Gastrocnemius medialis (tissue), 4 donors: ENCODE measurements at regions of chr17 and their contacts with region 1.

Region 1: GRCh38 chr17:74368092-74369081 is 1.1 kb downstream of the GPR142 start:
- DNase-seq: peak; percentile 61 to 71
- ATAC-seq: peak; percentile 86 to 90
- H3K4me3 ChIP-seq: no peak overlapping the region
- H3K27ac ChIP-seq: no peak overlapping the region
- H3K4me1 ChIP-seq: peaks cover 0 to 7% of the 10 kb centered on the region in 2 donors
- H3K27me3 ChIP-seq: no peaks in the 10 kb centered on the region
- CTCF ChIP-seq: peak; percentile 90 to 98 (median 96)
- POLR2A ChIP-seq: no peak

Region 2: DNA sequence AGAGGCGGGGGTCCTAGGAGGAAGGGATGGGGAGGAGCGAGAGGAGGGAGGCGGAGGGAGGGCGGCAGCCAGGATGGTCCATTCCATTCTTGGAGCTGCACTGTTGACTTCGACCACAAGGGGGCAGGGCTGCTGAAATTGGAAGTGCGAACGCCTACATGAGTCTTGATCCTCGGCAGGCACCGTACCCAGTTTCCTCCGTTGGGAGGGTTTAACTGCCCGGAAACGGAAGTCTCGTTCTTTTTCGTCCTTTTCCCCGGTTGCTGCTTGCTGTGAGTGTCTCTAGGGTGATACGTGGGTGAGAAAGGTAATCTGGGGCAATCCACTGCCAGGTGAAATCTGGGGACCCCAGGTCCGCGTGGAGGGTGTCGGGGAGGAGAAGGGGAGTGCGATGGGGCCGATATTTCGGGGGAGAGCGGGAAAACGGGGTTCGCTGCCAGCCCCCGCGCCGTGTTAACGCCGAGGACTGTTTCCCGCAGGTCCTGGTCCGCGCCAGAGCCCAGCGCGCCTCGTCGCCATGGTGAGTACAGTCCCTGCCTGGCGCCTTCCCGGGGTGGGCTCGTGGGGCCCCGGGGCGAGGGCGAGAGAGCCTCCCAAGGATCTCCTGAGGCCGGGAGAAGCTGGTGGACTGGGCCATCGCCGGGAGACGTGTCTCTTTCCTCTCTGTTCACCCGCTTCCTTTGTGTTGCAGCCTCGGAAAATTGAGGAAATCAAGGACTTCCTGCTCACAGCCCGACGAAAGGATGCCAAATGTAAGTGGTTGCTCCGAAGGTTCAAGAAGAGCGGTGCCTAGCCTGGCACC is 164.7 kb before region 1 on chr17 and contains the start of gene RPL38:
- in situ Hi-C with region 1: loop called in 3 of 4 experiments (anchors 10 to 25 kb)
- intact Hi-C with region 1: no loop called
- DNase-seq: peak; percentile 94 to 95
- ATAC-seq: peak; percentile 92 to 96
- H3K4me3 ChIP-seq: peak within 1 kb of the TSS; percentile 80 to 93 (median 87)
- H3K27ac ChIP-seq: peak within 1 kb of the TSS; percentile 87 to 89 (median 88)
- H3K4me1 ChIP-seq: peaks cover 28 to 40% of the 10 kb centered on the region in 2 donors
- H3K27me3 ChIP-seq: peaks cover 0 to 13% (median 0%) of the 10 kb centered on the region in 3 donors
- CTCF ChIP-seq: peak; percentile 93 to 98 (median 96)
- POLR2A ChIP-seq: peak; percentile 90 to 93
- total RNA-seq, gene RPL38: 346 to 472 (median 443) TPM

Region 3: GRCh38 chr17:74305865-74306654 is 62.3 kb before region 1 on chr17:
- in situ Hi-C with region 1: loop called in 1 of 4 experiments (anchors 10 kb)
- intact Hi-C with region 1: no loop called
- DNase-seq: no peak
- ATAC-seq: no peak
- H3K4me3 ChIP-seq: no peak overlapping the region
- H3K27ac ChIP-seq: no peak overlapping the region
- H3K4me1 ChIP-seq: no peaks in the 10 kb centered on the region
- H3K27me3 ChIP-seq: no peaks in the 10 kb centered on the region
- CTCF ChIP-seq: no peak
- POLR2A ChIP-seq: no peak

Region 4: DNA sequence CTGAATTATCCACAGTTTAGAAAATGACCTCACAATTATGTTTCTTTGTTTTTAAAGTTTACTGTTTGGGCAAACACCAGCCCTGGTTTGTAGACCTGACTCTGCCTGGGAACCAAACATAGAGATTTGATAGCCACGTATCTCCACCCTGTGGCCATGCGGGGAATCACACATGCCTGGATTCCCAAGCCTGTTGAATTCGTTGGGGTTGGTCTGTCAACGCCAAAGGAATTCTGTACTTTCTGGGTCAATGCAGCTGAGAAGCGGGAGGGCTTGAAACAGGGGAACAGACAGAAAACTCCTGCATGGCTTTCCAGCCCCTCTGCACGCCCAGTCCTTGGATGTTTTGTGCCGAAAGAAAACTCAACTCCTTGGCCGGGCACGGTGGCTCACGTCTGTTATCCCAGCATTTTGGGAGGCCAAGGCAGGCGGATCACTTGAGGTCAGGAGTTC is 125.0 kb after region 1 on chr17:
- in situ Hi-C with region 1: loop called in 2 of 4 experiments (anchors 10 kb)
- intact Hi-C with region 1: loop called (anchors 1 kb)
- DNase-seq: peak; percentile 34 to 62
- ATAC-seq: peak; percentile 95 to 97
- H3K4me3 ChIP-seq: no peak overlapping the region
- H3K27ac ChIP-seq: no peak overlapping the region
- H3K4me1 ChIP-seq: peaks cover 4 to 12% of the 10 kb centered on the region in 2 donors
- H3K27me3 ChIP-seq: no peaks in the 10 kb centered on the region
- CTCF ChIP-seq: peak; percentile 84 to 92 (median 89)
- POLR2A ChIP-seq: no peak

Region 5: GRCh38 chr17:74528491-74529199 is 160.3 kb after region 1 on chr17:
- in situ Hi-C with region 1: no loop called
- intact Hi-C with region 1: loop called (anchors 1 kb)
- DNase-seq: peak in 1 of 2 donors; percentile 31
- ATAC-seq: peak; percentile 17 to 34
- H3K4me3 ChIP-seq: no peak overlapping the region
- H3K27ac ChIP-seq: no peak overlapping the region
- H3K4me1 ChIP-seq: no peaks in the 10 kb centered on the region
- H3K27me3 ChIP-seq: no peaks in the 10 kb centered on the region
- CTCF ChIP-seq: no peak
- POLR2A ChIP-seq: no peak

Region 6: DNA sequence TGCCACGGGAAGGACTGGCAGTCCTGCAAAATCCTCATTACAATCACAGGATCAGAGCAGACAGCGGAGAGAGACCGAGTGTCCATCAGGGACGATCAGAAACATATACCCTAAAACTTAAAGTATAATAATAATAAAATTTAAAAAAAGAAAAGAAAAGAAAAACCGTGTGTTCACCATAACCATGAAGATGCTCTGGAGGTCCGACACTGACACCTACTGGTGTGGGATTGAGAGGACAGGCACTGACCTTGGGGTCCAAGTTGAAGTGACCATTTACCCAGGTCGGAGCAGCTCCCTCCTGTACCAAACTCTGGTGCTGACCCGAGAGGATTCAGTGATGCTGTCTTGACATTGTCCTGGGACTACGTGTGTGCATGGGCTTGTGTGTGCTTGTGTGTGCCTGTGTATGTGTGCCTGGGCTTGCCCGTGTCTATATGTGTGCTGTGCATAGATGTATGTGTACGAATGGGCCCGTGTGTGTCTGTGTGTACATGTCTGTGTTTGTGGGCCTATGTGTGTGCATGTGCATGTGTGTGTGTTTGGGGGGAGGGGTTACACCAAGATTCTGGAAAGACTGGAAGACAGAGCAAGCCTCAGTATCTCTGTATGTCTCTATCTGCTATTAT is 233.7 kb after region 1 on chr17:
- in situ Hi-C with region 1: no loop called
- intact Hi-C with region 1: loop called (anchors 5 kb)
- DNase-seq: no peak
- ATAC-seq: no peak
- H3K4me3 ChIP-seq: no peak overlapping the region
- H3K27ac ChIP-seq: no peak overlapping the region
- H3K4me1 ChIP-seq: no peaks in the 10 kb centered on the region
- H3K27me3 ChIP-seq: peaks cover 2 to 11% (median 5%) of the 10 kb centered on the region in 3 donors
- CTCF ChIP-seq: peak in 4 of 5 experiments; percentile 34 to 59 (median 48)
- POLR2A ChIP-seq: no peak